ENCODE measurements at regions of chrX and their contacts with region 1.

Region 1: GRCh38 chrX:120250522-120251271 is at the start of gene ZBTB33:
- DNase-seq: peak; percentile 82 to 86 (median 85)
- H3K4me3 ChIP-seq: peak within 1 kb of the TSS; percentile 69 to 82
- H3K4me3 Mint-ChIP-seq: peak within 1 kb of the TSS; percentile 88 to 96 (median 94)
- H3K27ac ChIP-seq: peak within 1 kb of the TSS; percentile 82
- H3K27ac Mint-ChIP-seq: peak within 1 kb of the TSS; percentile 86 to 99 (median 97)
- H3K4me1 ChIP-seq: peaks cover 16% of the 10 kb centered on the region
- H3K4me1 Mint-ChIP-seq: peaks cover 6 to 41% (median 18%) of the 10 kb centered on the region in 4 donors
- H3K27me3 ChIP-seq: no peaks in the 10 kb centered on the region
- H3K27me3 Mint-ChIP-seq: no peaks in the 10 kb centered on the region
- total RNA-seq, gene ZBTB33: 33.5 to 34.6 TPM

Region 2: DNA sequence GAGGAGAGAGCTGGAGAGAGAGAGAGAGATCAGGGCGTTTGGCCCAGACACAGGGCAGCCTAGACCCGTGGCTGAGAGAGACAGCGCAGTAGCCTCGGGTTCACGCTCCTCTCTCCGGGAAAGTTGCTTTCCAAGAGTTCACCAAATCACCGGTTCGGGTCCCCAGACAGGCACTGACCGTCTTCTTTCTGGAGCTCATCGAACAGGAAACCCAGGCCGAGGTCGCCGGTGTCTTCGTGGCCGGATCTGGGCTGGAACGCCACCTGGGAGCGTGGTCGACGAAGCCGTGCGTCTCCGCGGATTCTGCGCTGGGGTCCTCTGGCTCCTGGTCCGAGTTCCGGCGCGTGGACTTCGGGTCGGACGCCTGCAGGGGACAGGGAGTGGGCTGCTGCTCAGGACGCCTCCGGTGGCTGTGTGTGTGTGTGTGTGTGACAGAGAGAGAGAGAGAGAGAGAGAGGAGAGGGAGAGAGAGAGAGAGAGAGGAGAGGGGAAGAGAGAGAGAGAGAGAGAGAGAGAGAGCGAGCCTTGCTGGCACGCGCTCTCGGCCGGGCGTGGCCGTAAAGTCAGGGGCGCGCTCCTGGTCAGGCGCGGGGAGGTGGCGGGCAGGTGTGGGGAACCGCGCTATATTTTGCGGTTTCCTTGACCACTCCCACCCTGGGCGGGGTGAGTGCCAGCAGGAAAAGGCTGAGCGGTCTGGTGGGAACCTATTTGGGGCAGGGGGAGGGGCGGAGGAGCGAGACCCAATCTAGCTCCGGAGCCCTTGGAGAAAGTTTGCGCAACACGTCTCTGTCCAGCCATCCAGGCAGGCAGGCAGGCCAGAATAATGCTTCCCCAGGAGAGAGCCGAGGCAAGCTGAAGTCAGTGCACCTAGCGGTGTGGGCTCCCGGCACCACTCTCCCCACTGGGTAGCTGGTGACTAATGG is 235.3 kb before region 1 on chrX:
- CTCF ChIA-PET with region 1: no interaction called
- POLR2A ChIA-PET with region 1: no interaction called
- intact Hi-C with region 1: no loop called
- DNase-seq: no peak
- H3K4me3 ChIP-seq: no peak overlapping the region
- H3K4me3 Mint-ChIP-seq: peak overlapping the region; percentile 61 to 77 (median 70)
- H3K27ac ChIP-seq: no peak overlapping the region
- H3K27ac Mint-ChIP-seq: peak overlapping the region in 2 of 7 donors; percentile 72 to 83
- H3K4me1 ChIP-seq: peaks cover 8% of the 10 kb centered on the region
- H3K4me1 Mint-ChIP-seq: peaks cover 8 to 17% (median 14%) of the 10 kb centered on the region in 4 donors
- H3K27me3 ChIP-seq: no peaks in the 10 kb centered on the region
- H3K27me3 Mint-ChIP-seq: peaks cover 6 to 27% of the 10 kb centered on the region in 2 donors

Region 3: GRCh38 chrX:120269373-120270035 is 18.8 kb after region 1 on chrX:
- CTCF ChIA-PET with region 1: interaction called, 4 read pairs
- POLR2A ChIA-PET with region 1: interaction called, 13 read pairs
- intact Hi-C with region 1: loop called (anchors 2 kb)
- DNase-seq: peak in 4 of 5 donors; percentile 7 to 43 (median 34)
- H3K4me3 ChIP-seq: no peak overlapping the region
- H3K4me3 Mint-ChIP-seq: no peak overlapping the region
- H3K27ac ChIP-seq: no peak overlapping the region
- H3K27ac Mint-ChIP-seq: peak overlapping the region; percentile 44 to 90 (median 79)
- H3K4me1 ChIP-seq: peaks cover 10% of the 10 kb centered on the region
- H3K4me1 Mint-ChIP-seq: peaks cover 2 to 15% (median 7%) of the 10 kb centered on the region in 4 donors
- H3K27me3 ChIP-seq: no peaks in the 10 kb centered on the region
- H3K27me3 Mint-ChIP-seq: no peaks in the 10 kb centered on the region

Region 4: GRCh38 chrX:120302434-120302833 is 51.7 kb after region 1 on chrX:
- CTCF ChIA-PET with region 1: interaction called, 7 read pairs
- POLR2A ChIA-PET with region 1: interaction called, 18 read pairs
- intact Hi-C with region 1: no loop called
- DNase-seq: peak; percentile 20 to 63 (median 59)
- H3K4me3 ChIP-seq: no peak overlapping the region
- H3K4me3 Mint-ChIP-seq: peak overlapping the region; percentile 17 to 76 (median 59)
- H3K27ac ChIP-seq: peak overlapping the region; percentile 26
- H3K27ac Mint-ChIP-seq: peak overlapping the region in 6 of 7 donors; percentile 51 to 91 (median 78)
- H3K4me1 ChIP-seq: peaks cover 27% of the 10 kb centered on the region
- H3K4me1 Mint-ChIP-seq: peaks cover 14 to 28% (median 16%) of the 10 kb centered on the region in 4 donors
- H3K27me3 ChIP-seq: no peaks in the 10 kb centered on the region
- H3K27me3 Mint-ChIP-seq: no peaks in the 10 kb centered on the region

Region 5: DNA sequence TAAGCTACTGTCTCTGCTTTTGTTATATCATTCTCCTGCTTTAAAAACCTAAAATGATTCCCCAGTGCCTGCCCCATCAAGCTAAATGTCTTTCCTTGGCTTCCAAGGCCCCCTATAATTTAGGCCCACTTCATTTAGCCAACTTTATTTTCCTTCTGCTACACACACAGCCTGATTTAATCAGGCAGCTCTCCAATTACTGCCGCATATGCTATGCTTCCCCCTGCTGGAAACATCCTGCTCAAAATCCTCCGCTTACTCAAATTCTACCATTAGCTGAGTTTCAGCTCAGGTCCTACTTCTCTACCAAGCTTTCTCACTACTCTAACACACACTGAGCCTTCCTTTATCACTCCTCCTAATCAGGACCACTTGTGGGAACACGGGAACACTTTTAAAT is 201.4 kb after region 1 on chrX:
- CTCF ChIA-PET with region 1: interaction called, 3 read pairs
- POLR2A ChIA-PET with region 1: no interaction called
- intact Hi-C with region 1: loop called (anchors 5 kb)
- DNase-seq: no peak
- H3K4me3 ChIP-seq: no peak overlapping the region
- H3K4me3 Mint-ChIP-seq: no peak overlapping the region
- H3K27ac ChIP-seq: no peak overlapping the region
- H3K27ac Mint-ChIP-seq: no peak overlapping the region
- H3K4me1 ChIP-seq: peaks cover 22% of the 10 kb centered on the region
- H3K4me1 Mint-ChIP-seq: peaks cover 15 to 30% (median 18%) of the 10 kb centered on the region in 4 donors
- H3K27me3 ChIP-seq: no peaks in the 10 kb centered on the region
- H3K27me3 Mint-ChIP-seq: no peaks in the 10 kb centered on the region

Region 6: DNA sequence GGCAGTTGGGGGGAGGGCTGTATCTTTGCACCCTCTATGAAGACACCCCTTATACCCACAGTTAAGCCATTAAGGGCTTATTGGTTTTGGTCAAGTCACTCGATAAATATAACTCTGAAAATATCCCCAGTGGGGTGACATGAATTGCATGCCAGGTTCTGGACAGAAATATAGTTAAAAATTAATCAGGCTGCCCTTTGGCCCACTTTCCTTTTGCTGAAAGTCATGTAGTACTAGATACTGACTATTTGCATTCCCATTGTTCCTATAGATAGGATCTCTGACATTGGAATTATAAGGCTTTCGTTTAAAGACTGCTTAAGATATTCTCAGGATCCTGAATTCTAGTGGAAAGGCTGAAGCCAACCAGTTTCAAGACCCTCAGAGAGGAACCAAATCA is 261.9 kb after region 1 on chrX:
- CTCF ChIA-PET with region 1: no interaction called
- POLR2A ChIA-PET with region 1: no interaction called
- intact Hi-C with region 1: no loop called
- DNase-seq: no peak
- H3K4me3 ChIP-seq: no peak overlapping the region
- H3K4me3 Mint-ChIP-seq: no peak overlapping the region
- H3K27ac ChIP-seq: no peak overlapping the region
- H3K27ac Mint-ChIP-seq: no peak overlapping the region
- H3K4me1 ChIP-seq: no peaks in the 10 kb centered on the region
- H3K4me1 Mint-ChIP-seq: peaks cover 0 to 2% (median 0%) of the 10 kb centered on the region in 4 donors
- H3K27me3 ChIP-seq: no peaks in the 10 kb centered on the region
- H3K27me3 Mint-ChIP-seq: no peaks in the 10 kb centered on the region

Region 7: GRCh38 chrX:120560842-120561633 is 310.3 kb after region 1 on chrX and contains the start of gene CUL4B:
- CTCF ChIA-PET with region 1: no interaction called
- POLR2A ChIA-PET with region 1: interaction called, 10 read pairs
- intact Hi-C with region 1: no loop called
- DNase-seq: peak; percentile 89 to 97 (median 91)
- H3K4me3 ChIP-seq: peak within 1 kb of the TSS; percentile 59 to 90
- H3K4me3 Mint-ChIP-seq: peak within 1 kb of the TSS; percentile 91 to 99 (median 94)
- H3K27ac ChIP-seq: peak within 1 kb of the TSS; percentile 91
- H3K27ac Mint-ChIP-seq: peak within 1 kb of the TSS; percentile 94 to 98 (median 96)
- H3K4me1 ChIP-seq: peaks cover 31% of the 10 kb centered on the region
- H3K4me1 Mint-ChIP-seq: peaks cover 9 to 44% (median 17%) of the 10 kb centered on the region in 4 donors
- H3K27me3 ChIP-seq: no peaks in the 10 kb centered on the region
- H3K27me3 Mint-ChIP-seq: no peaks in the 10 kb centered on the region
- total RNA-seq, gene CUL4B: 54.0 to 61.0 TPM

Region 8: GRCh38 chrX:120840827-120841226 is 590.1 kb after region 1 on chrX:
- CTCF ChIA-PET with region 1: no interaction called
- POLR2A ChIA-PET with region 1: no interaction called
- intact Hi-C with region 1: no loop called
- DNase-seq: no peak
- H3K4me3 ChIP-seq: no peak overlapping the region
- H3K4me3 Mint-ChIP-seq: no peak overlapping the region
- H3K27ac ChIP-seq: no peak overlapping the region
- H3K27ac Mint-ChIP-seq: no peak overlapping the region
- H3K4me1 ChIP-seq: no peaks in the 10 kb centered on the region
- H3K4me1 Mint-ChIP-seq: no peaks in the 10 kb centered on the region
- H3K27me3 ChIP-seq: no peaks in the 10 kb centered on the region
- H3K27me3 Mint-ChIP-seq: no peaks in the 10 kb centered on the region

Measured in CD4-positive, alpha-beta memory T cell (primary cell).